Heart left ventricle (tissue), 16 donors: ENCODE measurements at regions of chr3 and their contacts with region 1.

Region 1: DNA sequence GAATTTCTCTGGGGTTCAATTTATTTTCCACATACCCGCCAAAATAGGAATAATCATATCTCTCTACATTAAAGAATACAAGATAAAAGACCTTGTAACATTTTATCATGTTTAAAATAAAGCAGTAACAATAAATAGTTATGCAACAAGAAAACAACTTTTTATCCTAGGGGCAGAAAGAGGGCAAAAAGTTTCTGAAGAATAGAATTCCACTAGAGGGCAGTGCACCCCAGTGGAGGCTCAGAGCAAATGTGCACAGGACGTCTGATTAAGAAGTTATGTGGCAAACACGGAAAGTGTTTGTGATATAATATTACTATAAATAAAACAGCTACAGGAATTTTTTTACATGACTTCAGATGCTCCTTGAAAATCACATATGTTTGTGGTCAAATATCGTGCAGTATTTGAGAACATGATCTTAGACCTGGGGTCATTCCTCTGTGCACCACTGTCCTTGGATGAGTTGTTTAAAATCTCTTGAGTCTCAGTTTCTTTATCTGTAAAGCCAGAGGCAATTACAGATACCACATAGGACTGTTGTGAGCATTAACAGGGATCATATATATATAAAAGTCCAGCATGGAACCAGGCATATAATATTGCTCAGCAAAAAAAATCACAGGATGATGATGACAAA is 13.2 kb upstream of the PIK3R4 start:
- DNase-seq: peak in 3 of 5 donors; percentile 45 to 62 (median 50)
- ATAC-seq: peak; percentile 69 to 86 (median 80)
- H3K4me3 ChIP-seq: peak overlapping the region in 2 of 12 donors; percentile 4 to 6
- H3K27ac ChIP-seq: peak overlapping the region in 1 of 12 donors; percentile 3
- H3K4me1 ChIP-seq: peaks cover 0 to 6% (median 0%) of the 10 kb centered on the region in 12 donors
- H3K27me3 ChIP-seq: no peaks in the 10 kb centered on the region
- CTCF ChIP-seq: peak; percentile 71 to 87 (median 82)
- POLR2A ChIP-seq: no peak

Region 2: GRCh38 chr3:130839813-130840212 is 80.0 kb after region 1 on chr3:
- intact Hi-C with region 1: loop called in 1 of 10 experiments (anchors 5 kb)
- DNase-seq: peak in 1 of 5 donors; percentile 23
- ATAC-seq: no peak
- H3K4me3 ChIP-seq: no peak overlapping the region
- H3K27ac ChIP-seq: peak overlapping the region in 6 of 12 donors; percentile 16 to 86 (median 39)
- H3K4me1 ChIP-seq: peaks cover 0 to 41% (median 12%) of the 10 kb centered on the region in 12 donors
- H3K27me3 ChIP-seq: no peaks in the 10 kb centered on the region
- CTCF ChIP-seq: no peak
- POLR2A ChIP-seq: no peak

Region 3: GRCh38 chr3:130892759-130893375 is 133.0 kb after region 1 on chr3:
- intact Hi-C with region 1: loop called (anchors 1 to 5 kb)
- DNase-seq: peak in 4 of 5 donors; percentile 50 to 70 (median 68)
- ATAC-seq: peak; percentile 63 to 81 (median 75)
- H3K4me3 ChIP-seq: peak overlapping the region; percentile 62 to 94 (median 85)
- H3K27ac ChIP-seq: peak overlapping the region; percentile 89 to 99 (median 96)
- H3K4me1 ChIP-seq: peaks cover 0 to 36% (median 26%) of the 10 kb centered on the region in 12 donors
- H3K27me3 ChIP-seq: no peaks in the 10 kb centered on the region
- CTCF ChIP-seq: peak; percentile 74 to 92 (median 84)
- POLR2A ChIP-seq: no peak